B cell (primary cell): ENCODE measurements at regions of chr16 and their contacts with region 1.

Region 1: DNA sequence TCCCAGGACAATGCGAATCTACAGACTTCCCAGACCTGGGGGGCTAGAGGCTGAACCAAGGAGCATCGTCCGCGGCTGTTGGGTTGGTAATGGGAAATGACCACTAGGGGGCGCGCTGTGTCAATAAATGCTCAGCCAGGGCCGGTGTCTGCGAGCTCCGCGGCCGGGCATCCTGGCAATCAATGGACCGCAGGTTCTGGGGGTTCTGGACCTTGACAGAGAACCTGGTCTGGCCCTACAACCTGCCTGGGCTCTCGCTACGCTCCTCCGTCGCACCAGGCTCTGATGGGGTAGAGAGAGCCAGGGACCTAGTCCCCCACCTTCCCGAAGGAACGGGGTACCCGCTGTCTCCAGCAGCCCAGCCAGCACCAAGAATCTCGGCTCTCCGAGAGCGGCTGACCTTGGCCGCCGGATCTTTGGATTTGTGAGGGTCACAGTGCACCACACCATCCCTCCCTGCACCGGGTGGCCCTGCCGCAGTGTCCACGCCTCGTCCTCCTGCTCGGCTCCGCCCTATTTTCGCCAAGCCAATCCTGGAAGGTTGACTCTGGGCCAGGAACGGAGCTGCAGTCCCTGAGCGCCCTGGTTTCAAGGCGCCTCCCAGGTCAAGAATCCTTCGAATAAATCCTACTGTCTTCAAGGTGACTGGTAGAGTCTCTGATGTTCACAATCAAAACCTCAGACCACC is 20.4 kb upstream of the BEAN1 start:
- DNase-seq: peak; percentile 88
- ATAC-seq: peak; percentile 92
- H3K4me3 ChIP-seq: peak overlapping the region in 4 of 5 experiments; percentile 10 to 56 (median 44)
- H3K4me3 Mint-ChIP-seq: peak overlapping the region; percentile 79
- H3K27ac ChIP-seq: no peak overlapping the region
- H3K27ac Mint-ChIP-seq: no peak overlapping the region
- H3K4me1 ChIP-seq: peaks cover 16 to 18% of the 10 kb centered on the region in 2 donors
- H3K4me1 Mint-ChIP-seq: peaks cover 14% of the 10 kb centered on the region
- H3K27me3 ChIP-seq: peaks cover 0 to 22% (median 17%) of the 10 kb centered on the region in 4 experiments
- H3K27me3 Mint-ChIP-seq: peaks cover 47% of the 10 kb centered on the region
- CTCF ChIP-seq: peak; percentile 96

Region 2: GRCh38 chr16:66511615-66512500 is 105.2 kb after region 1 on chr16:
- CTCF ChIA-PET with region 1: interaction called, 12 read pairs
- POLR2A ChIA-PET with region 1: no interaction called
- intact Hi-C with region 1: no loop called
- DNase-seq: peak; percentile 34
- ATAC-seq: no peak
- H3K4me3 ChIP-seq: no peak overlapping the region
- H3K4me3 Mint-ChIP-seq: no peak overlapping the region
- H3K27ac ChIP-seq: no peak overlapping the region
- H3K27ac Mint-ChIP-seq: peak overlapping the region; percentile 16
- H3K4me1 ChIP-seq: peaks cover 15 to 29% of the 10 kb centered on the region in 2 donors
- H3K4me1 Mint-ChIP-seq: peaks cover 41% of the 10 kb centered on the region
- H3K27me3 ChIP-seq: peaks cover 0 to 3% (median 0%) of the 10 kb centered on the region in 4 experiments
- H3K27me3 Mint-ChIP-seq: peaks cover 3% of the 10 kb centered on the region
- CTCF ChIP-seq: no peak

Region 3: DNA sequence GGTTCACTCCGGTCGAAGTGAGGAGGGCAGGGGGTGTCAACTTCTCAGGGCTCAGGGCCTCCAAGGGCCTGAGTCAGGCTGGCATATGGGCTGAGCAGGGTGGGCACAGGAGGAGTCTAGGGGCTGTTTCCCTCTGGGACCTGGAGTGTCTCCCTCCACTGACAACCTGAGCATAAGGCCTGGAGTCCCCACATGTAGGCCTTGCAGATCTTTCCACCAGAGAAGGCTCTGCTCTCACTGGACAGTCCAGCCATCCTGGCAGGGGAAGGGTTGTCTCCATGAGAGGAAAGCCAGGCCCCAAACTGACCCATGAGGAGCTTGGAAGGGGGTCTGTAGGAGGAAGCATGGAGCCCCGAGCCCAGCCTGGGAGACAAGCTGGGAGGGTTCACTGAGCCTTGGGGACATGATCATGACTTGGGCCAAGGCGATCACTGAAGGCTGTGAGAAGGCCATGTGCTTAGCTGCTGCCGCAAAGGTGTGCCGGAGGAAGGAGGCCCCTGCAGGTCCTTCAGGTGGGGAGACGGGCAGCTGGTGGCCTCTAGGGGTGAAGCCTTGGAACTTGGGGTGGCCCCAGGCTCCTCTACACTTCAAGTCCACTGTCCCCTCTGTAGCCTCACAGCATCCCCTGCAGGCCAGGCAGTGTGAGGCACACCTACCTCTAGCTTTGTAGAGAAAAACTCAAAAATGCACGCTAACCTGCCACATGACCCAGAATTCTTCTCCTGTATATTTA is 182.5 kb after region 1 on chr16:
- CTCF ChIA-PET with region 1: interaction called, 71 read pairs
- POLR2A ChIA-PET with region 1: no interaction called
- intact Hi-C with region 1: loop called (anchors 1 kb)
- DNase-seq: peak; percentile 79
- ATAC-seq: peak; percentile 90
- H3K4me3 ChIP-seq: no peak overlapping the region
- H3K4me3 Mint-ChIP-seq: peak overlapping the region; percentile 75
- H3K27ac ChIP-seq: no peak overlapping the region
- H3K27ac Mint-ChIP-seq: peak overlapping the region; percentile 59
- H3K4me1 ChIP-seq: peaks cover 24 to 34% of the 10 kb centered on the region in 2 donors
- H3K4me1 Mint-ChIP-seq: peaks cover 30% of the 10 kb centered on the region
- H3K27me3 ChIP-seq: peaks cover 0 to 20% (median 6%) of the 10 kb centered on the region in 4 experiments
- H3K27me3 Mint-ChIP-seq: peaks cover 9% of the 10 kb centered on the region
- CTCF ChIP-seq: peak; percentile 83

Region 4: GRCh38 chr16:66728117-66728787 is 321.6 kb after region 1 on chr16:
- CTCF ChIA-PET with region 1: interaction called, 40 read pairs
- POLR2A ChIA-PET with region 1: no interaction called
- intact Hi-C with region 1: loop called (anchors 2 kb)
- DNase-seq: peak; percentile 60
- ATAC-seq: peak; percentile 57
- H3K4me3 ChIP-seq: no peak overlapping the region
- H3K4me3 Mint-ChIP-seq: no peak overlapping the region
- H3K27ac ChIP-seq: no peak overlapping the region
- H3K27ac Mint-ChIP-seq: no peak overlapping the region
- H3K4me1 ChIP-seq: no peaks in the 10 kb centered on the region
- H3K4me1 Mint-ChIP-seq: peaks cover 3% of the 10 kb centered on the region
- H3K27me3 ChIP-seq: no peaks in the 10 kb centered on the region
- H3K27me3 Mint-ChIP-seq: no peaks in the 10 kb centered on the region
- CTCF ChIP-seq: peak; percentile 83

Region 5: GRCh38 chr16:66872943-66873684 is 466.4 kb after region 1 on chr16:
- CTCF ChIA-PET with region 1: interaction called, 87 read pairs
- POLR2A ChIA-PET with region 1: no interaction called
- intact Hi-C with region 1: no loop called
- DNase-seq: peak; percentile 91
- ATAC-seq: peak; percentile 90
- H3K4me3 ChIP-seq: peak overlapping the region in 4 of 5 experiments; percentile 32 to 45 (median 44)
- H3K4me3 Mint-ChIP-seq: peak overlapping the region; percentile 77
- H3K27ac ChIP-seq: no peak overlapping the region
- H3K27ac Mint-ChIP-seq: peak overlapping the region; percentile 72
- H3K4me1 ChIP-seq: peaks cover 7 to 11% of the 10 kb centered on the region in 2 donors
- H3K4me1 Mint-ChIP-seq: peaks cover 14% of the 10 kb centered on the region
- H3K27me3 ChIP-seq: peaks cover 0 to 1% (median 0%) of the 10 kb centered on the region in 4 experiments
- H3K27me3 Mint-ChIP-seq: peaks cover 3% of the 10 kb centered on the region
- CTCF ChIP-seq: peak; percentile 92